Heart left ventricle (tissue), 16 donors: ENCODE measurements at regions of chr14 and their contacts with region 1.

Region 1: GRCh38 chr14:104976198-104977007 is 1.8 kb downstream of the AHNAK2 start:
- DNase-seq: peak; percentile 81 to 92 (median 86)
- ATAC-seq: peak; percentile 54 to 72 (median 58)
- H3K4me3 ChIP-seq: no peak overlapping the region
- H3K27ac ChIP-seq: no peak overlapping the region
- H3K4me1 ChIP-seq: peaks cover 8 to 75% (median 44%) of the 10 kb centered on the region in 12 donors
- H3K27me3 ChIP-seq: peaks cover 0 to 20% (median 0%) of the 10 kb centered on the region in 9 donors
- CTCF ChIP-seq: peak; percentile 77 to 96 (median 92)
- POLR2A ChIP-seq: no peak

Region 2: GRCh38 chr14:105012171-105012985 is 36.0 kb after region 1 on chr14:
- intact Hi-C with region 1: loop called in 1 of 10 experiments (anchors 5 kb)
- DNase-seq: no peak
- ATAC-seq: peak; percentile 42 to 81 (median 72)
- H3K4me3 ChIP-seq: no peak overlapping the region
- H3K27ac ChIP-seq: peak overlapping the region in 1 of 12 donors; percentile 19
- H3K4me1 ChIP-seq: peaks cover 0 to 15% (median 8%) of the 10 kb centered on the region in 12 donors
- H3K27me3 ChIP-seq: no peaks in the 10 kb centered on the region
- CTCF ChIP-seq: peak in 9 of 12 donors; percentile 20 to 53 (median 40)
- POLR2A ChIP-seq: no peak

Region 3: GRCh38 chr14:105020815-105021655 is 44.6 kb after region 1 on chr14 and contains the start of gene CDCA4:
- intact Hi-C with region 1: loop called in 3 of 10 experiments (anchors 5 kb)
- DNase-seq: peak; percentile 97 to 99 (median 98)
- ATAC-seq: peak; percentile 97 to 98 (median 98)
- H3K4me3 ChIP-seq: peak within 1 kb of the TSS; percentile 52 to 96 (median 90)
- H3K27ac ChIP-seq: peak within 1 kb of the TSS; percentile 40 to 91 (median 82)
- H3K4me1 ChIP-seq: peaks cover 0 to 61% (median 20%) of the 10 kb centered on the region in 12 donors
- H3K27me3 ChIP-seq: no peaks in the 10 kb centered on the region
- CTCF ChIP-seq: peak in 1 of 12 donors; percentile 13
- POLR2A ChIP-seq: peak in 1 of 2 donors; percentile 74
- total RNA-seq, gene CDCA4: 1.4 to 6.0 (median 2.4) TPM

Region 4: GRCh38 chr14:105086833-105087307 is 110.5 kb after region 1 on chr14:
- intact Hi-C with region 1: loop called in 4 of 10 experiments (anchors 2 to 5 kb)
- DNase-seq: peak; percentile 78 to 94 (median 82)
- ATAC-seq: peak in 3 of 4 donors; percentile 43 to 63 (median 55)
- H3K4me3 ChIP-seq: peak overlapping the region; percentile 3 to 64 (median 53)
- H3K27ac ChIP-seq: peak overlapping the region in 9 of 12 donors; percentile 28 to 74 (median 47)
- H3K4me1 ChIP-seq: peaks cover 9 to 48% (median 34%) of the 10 kb centered on the region in 12 donors
- H3K27me3 ChIP-seq: peaks cover 0 to 11% (median 0%) of the 10 kb centered on the region in 9 donors
- CTCF ChIP-seq: peak; percentile 72 to 90 (median 83)
- POLR2A ChIP-seq: no peak